AG04449 (cell line): ENCODE measurements at regions of chr11 and their contacts with region 1.

Region 1: DNA sequence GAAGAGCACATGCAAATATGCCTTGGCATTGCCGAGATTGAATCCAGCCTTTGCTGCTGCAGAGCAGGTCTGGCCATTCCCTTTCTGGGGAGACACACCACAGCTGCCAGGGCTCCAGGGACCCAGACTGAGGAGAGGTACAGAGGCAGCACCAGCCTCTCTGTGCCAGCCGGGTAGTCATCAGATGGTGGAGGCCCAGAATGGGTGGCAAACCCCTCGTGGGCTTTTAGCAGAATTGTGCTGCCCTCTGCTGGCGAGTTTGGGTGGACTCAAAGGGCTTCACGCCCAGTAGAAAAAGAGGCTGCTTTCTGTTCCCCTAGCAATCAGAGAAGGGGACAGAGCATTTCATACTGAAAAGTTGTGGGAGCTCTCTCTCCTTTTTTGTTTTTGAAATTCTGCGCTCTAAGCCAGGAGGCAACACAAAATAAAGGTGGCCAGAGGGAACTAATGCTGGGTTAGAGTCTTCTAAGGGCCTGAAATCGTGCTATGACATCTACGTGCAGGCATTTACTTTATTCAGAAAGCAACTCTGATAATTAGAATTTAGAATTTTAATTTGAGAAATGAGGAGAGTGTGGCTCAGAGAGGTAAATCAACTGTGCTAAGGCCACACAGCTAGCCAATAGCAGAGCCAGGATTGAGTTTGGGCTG is 158.8 kb upstream of the NAV2 start:
- DNase-seq: no peak
- H3K4me3 ChIP-seq: no peak overlapping the region
- CTCF ChIP-seq: peak; percentile 74

Region 2: DNA sequence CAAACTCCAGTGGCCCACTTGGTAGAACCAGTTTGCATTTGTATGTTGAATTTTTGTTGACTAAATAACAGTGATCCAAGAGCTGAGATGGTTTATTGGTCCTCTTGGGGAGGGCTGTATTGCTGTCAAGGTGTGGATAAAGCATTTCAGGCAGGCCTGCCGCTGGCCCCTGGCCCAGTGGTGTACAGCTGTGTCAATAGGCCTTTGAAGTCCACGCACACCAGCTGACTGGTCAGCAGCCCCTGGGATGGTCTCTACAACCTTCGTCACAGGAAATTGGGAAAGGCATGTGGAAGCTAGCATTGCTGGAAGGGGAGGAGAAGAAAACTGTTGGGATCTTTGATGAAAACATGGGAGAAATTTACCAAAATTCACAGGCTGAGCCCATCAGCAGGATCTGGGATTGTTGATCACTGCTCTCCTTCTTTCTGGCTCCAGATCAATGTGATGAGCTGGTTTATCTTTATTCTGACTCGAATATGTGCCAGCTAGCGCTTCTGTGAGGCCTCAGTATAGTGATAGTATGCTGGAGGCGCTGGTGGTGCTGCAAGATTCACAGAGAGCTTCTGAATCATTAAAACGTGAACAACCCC is 300.6 kb before region 1 on chr11:
- CTCF ChIA-PET with region 1: interaction called, 132 read pairs
- POLR2A ChIA-PET with region 1: no interaction called
- DNase-seq: no peak
- H3K4me3 ChIP-seq: no peak overlapping the region
- CTCF ChIP-seq: no peak

Region 3: GRCh38 chr11:19294444-19294843 is 259.4 kb before region 1 on chr11:
- CTCF ChIA-PET with region 1: interaction called, 11 read pairs
- POLR2A ChIA-PET with region 1: no interaction called
- DNase-seq: no peak
- H3K4me3 ChIP-seq: no peak overlapping the region
- CTCF ChIP-seq: no peak

Region 4: DNA sequence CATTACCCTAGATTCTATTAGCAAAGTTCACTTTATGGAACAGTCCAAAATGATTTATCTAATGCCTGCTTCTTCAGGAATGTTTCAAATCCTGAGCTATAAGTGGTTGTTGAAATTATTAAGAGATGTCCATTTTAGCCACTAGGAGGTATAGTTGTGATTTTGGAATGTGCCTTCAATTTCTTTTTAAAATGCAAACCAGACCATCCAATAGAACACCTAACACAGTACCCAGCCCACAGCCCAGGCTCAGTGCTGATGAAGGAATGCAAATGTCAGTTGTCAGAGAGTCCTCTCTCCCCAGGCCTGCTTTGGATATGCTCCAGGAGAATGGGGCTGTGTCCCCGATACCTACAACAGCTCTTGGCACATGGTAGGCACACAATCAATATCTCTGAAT is 227.3 kb before region 1 on chr11:
- CTCF ChIA-PET with region 1: interaction called, 190 read pairs
- POLR2A ChIA-PET with region 1: no interaction called
- DNase-seq: no peak
- H3K4me3 ChIP-seq: no peak overlapping the region
- CTCF ChIP-seq: no peak

Region 5: DNA sequence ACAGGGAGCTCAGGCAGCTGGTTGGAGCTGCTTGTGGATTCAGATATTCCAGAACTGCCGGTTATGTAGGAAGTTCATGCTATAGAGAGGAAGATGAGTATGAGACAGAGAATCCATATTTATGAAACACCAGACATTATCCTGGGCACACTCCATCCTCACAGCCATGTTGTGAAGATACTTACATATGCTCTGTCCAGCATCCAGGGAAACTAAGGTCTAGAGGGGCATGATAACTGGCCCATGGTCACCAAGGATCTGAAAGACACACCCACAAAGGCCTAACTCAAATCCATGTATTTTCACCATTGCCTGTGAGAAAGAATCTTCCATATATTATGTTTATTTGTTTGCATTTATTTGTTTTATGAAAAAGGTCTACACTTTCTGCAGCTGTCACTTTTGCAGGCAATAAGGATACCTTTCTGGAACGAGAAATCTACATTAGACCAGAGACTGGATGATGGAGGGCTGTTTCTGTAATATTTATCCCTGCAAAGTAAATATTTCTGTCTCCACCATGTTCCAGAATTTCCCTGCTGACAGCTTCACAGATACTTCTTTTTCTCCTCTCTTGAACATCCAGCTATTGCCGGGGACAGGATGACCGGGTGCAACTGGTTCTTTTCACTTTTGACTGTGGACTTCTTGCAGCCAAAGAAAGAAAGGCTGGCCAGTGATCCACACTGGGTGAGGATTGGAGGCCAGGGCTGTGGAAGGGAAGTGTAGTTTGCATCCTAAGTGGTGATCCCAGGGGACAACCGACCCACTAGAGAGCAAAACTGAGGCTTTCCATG is 13.0 kb after region 1 on chr11:
- CTCF ChIA-PET with region 1: interaction called, 13 read pairs
- POLR2A ChIA-PET with region 1: no interaction called
- DNase-seq: no peak
- H3K4me3 ChIP-seq: no peak overlapping the region
- CTCF ChIP-seq: no peak

Region 6: GRCh38 chr11:19751055-19751454 is 197.2 kb after region 1 on chr11:
- CTCF ChIA-PET with region 1: interaction called, 452 read pairs
- POLR2A ChIA-PET with region 1: no interaction called
- DNase-seq: no peak
- H3K4me3 ChIP-seq: no peak overlapping the region
- CTCF ChIP-seq: no peak